Dendritic cell treated with granulocyte-macrophage colony-stimulating factor and Interleukin-4, amounts not matched to agents 40 ng/mL and 50 ng/mL, for 4 days (primary cell): ENCODE measurements at regions of chr1 and their contacts with region 1.

Region 1: GRCh38 chr1:222617367-222617951 is 438 bp upstream of the MIA3 start:
- H3K4me3 Mint-ChIP-seq: peak overlapping the region; percentile 83
- H3K27ac Mint-ChIP-seq: peak overlapping the region; percentile 76
- H3K4me1 Mint-ChIP-seq: peaks cover 26% of the 10 kb centered on the region
- H3K27me3 Mint-ChIP-seq: peaks cover 22% of the 10 kb centered on the region

Region 2: DNA sequence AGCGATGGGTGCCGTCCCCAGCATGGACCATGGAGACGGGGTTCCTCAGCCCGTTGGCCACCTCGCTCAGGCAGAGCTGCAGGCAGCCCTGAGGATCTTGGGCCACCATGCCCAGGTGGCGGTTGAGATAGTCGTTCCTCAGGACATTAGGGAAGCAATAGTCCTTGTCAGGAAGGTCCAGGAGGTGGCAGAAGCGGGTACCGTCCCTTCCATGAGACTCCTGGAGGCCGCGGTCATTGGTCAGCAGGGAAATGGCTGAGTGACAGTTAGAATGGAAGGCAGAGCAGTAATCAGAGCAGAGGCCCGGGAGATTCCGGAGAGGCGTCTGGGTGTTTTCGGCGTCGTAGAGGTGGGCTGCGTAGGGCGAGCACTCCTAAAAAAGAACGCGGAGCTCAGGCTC is 73.6 kb before region 1 on chr1:
- intact Hi-C with region 1: no loop called
- H3K4me3 Mint-ChIP-seq: no peak overlapping the region
- H3K27ac Mint-ChIP-seq: no peak overlapping the region
- H3K4me1 Mint-ChIP-seq: no peaks in the 10 kb centered on the region
- H3K27me3 Mint-ChIP-seq: peaks cover 13% of the 10 kb centered on the region

Region 3: DNA sequence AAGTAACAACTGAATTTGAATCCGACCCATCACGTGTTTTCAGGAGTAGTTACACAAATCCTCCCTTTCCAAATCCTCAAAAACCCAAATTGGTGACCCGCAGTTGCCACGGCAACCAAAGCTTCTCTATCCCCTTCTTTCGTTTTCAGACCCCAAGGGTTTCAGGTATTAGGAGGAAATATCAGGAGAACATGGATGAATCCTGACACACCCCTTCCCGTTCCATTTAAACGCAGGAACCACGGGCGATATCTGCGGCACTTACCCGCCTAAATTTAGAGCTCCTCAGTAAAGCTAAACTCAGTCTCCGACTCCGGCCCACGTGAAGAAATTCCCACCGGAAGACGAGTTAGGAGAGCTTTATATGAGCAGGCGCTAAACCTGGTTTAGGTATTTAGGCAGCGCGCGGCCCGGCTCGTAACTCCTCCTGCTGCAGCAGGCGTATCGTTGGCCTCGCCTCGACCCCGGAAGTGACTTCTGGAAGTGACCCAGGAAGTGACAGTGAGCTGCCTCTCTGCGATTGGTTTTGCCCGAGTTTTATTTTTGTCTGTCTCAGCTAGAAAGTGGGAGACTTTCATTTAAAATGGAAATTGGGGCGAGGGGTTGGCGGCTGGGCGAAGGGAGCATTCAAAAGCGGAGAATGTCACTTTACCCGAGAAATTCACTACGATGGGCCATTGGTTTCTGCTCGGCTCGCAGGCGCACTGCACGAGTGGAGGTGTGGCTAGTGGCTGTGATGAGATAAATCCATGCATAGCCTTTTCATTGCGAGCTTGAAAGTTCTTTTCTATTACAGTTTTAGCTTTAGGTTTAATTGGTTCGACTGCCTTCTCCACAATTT is 27.8 kb before region 1 on chr1 and contains the start of gene TAF1A:
- intact Hi-C with region 1: loop called (anchors 2 kb)
- H3K4me3 Mint-ChIP-seq: peak within 1 kb of the TSS; percentile 89
- H3K27ac Mint-ChIP-seq: peak within 1 kb of the TSS; percentile 93
- H3K4me1 Mint-ChIP-seq: peaks cover 25% of the 10 kb centered on the region
- H3K27me3 Mint-ChIP-seq: peaks cover 2% of the 10 kb centered on the region